ENCODE measurements at regions of chr13 and their contacts with region 1.

Region 1: DNA sequence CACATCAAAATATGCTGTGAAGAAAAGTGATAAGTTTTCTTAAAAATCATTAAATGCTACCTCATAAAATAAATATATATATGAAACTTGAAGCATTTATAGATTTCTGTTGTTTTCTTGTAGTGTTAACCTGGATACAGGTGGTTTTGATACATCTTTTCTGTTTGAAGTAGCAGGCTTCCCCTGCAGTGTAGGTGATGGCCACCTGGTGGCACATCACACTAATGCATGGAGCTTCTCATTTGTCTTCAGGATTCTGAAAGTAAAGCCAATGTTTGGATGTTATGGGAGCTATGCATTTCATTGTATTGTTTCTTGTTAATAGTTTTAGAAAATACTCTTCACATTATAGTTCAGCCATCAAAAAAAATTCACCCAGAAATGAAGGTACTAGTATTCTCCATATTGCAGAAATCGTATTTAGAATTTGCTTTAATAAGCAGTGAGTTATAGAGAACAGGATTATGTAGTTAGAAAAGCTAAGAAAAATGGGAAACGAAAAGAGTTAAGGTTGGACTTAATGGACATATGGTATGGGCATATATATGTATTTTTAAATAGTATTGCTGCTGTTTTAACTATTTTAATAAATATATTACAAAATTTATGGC is 18.7 kb downstream of the GPR180 start:
- DNase-seq: peak in 1 of 2 experiments; percentile 57
- H3K4me3 ChIP-seq: no peak overlapping the region
- H3K4me3 Mint-ChIP-seq: no peak overlapping the region
- H3K27ac Mint-ChIP-seq: no peak overlapping the region
- H3K4me1 ChIP-seq: no peaks in the 10 kb centered on the region
- H3K4me1 Mint-ChIP-seq: no peaks in the 10 kb centered on the region
- H3K27me3 ChIP-seq: no peaks in the 10 kb centered on the region
- H3K27me3 Mint-ChIP-seq: no peaks in the 10 kb centered on the region
- CTCF ChIP-seq: peak; percentile 80 to 89

Region 2: GRCh38 chr13:94435604-94436226 is 184.7 kb before region 1 on chr13:
- CTCF ChIA-PET with region 1: interaction called, 15 read pairs
- POLR2A ChIA-PET with region 1: no interaction called
- intact Hi-C with region 1: loop called (anchors 1 kb)
- DNase-seq: peak in 1 of 2 experiments; percentile 34
- H3K4me3 ChIP-seq: no peak overlapping the region
- H3K4me3 Mint-ChIP-seq: no peak overlapping the region
- H3K27ac Mint-ChIP-seq: no peak overlapping the region
- H3K4me1 ChIP-seq: peaks cover 7% of the 10 kb centered on the region
- H3K4me1 Mint-ChIP-seq: peaks cover 19% of the 10 kb centered on the region
- H3K27me3 ChIP-seq: peaks cover 1% of the 10 kb centered on the region; the same call in 1 of the 2 replicates
- H3K27me3 Mint-ChIP-seq: peaks cover 2% of the 10 kb centered on the region
- CTCF ChIP-seq: peak; percentile 53 to 67